ENCODE measurements at regions of chr2 and their contacts with region 1.

Region 1: DNA sequence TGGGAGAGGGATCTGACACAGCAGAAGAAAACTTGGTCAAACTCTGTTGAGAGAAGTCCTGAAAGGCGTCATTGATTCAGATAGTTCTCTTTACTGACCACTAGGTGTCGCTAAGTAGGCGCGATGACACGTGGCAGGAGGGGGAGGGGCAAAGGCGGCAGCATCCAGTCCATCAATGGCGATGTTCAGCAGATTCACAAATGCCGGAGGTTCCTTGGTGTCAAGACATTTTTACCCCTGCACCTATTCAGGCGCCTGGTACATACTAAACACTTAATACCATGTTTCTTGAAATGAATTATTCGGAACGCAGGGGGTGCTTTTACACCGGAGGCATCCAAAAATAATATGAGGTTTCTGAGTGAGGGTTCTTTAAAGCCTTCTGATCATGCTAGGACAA is 3.0 kb upstream of the PLEK start:
- DNase-seq: peak; percentile 95

Region 2: DNA sequence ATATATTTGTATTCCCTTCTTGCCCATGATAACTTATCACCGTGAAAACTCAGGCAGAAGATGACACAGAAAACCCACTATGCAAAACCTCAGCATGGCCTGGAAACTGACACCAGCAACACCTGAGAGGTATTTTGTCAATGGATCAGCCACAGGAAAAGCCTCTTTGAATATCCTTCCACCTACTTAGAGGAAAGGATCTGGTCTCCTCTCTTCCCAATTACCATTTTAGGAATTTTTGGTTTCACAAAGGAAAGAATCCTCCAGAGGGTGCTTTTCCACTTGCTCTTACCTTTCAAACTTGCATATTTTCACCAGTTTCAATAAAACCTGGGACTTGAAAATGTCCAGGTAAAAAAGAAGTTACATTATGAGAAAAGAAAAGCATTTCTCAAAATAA is 1947.2 kb before region 1 on chr2:
- intact Hi-C with region 1: loop called in 1 of 2 experiments (anchors 5 kb)
- DNase-seq: no peak

Region 3: DNA sequence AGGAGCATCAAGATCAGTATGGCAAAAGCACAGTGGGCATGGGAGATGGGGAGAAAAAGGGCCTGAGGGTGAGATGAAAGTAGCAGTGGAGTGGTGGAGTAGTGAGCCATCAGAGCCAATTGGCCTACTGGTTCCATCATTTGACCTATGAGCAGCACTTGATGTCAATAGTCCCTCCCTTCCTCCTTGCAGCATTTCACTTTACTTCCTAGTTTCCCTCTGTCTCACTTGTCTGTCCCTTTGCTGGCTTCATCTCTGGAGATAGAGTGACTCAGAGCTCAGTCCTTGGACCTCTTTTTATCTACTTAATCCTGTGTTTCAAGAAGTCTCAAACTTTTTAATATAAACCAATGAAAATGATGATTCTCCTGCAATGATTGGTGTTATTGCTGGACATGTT is 72.9 kb after region 1 on chr2:
- intact Hi-C with region 1: loop called (anchors 5 kb)
- DNase-seq: no peak

Region 4: GRCh38 chr2:68441179-68441993 is 79.3 kb after region 1 on chr2:
- intact Hi-C with region 1: loop called (anchors 5 kb)
- DNase-seq: peak; percentile 89

Measured in posterior vena cava (tissue), 2 donors.